ENCODE measurements at regions of chr6 and their contacts with region 1.

Region 1: GRCh38 chr6:66186756-66187155 is 479.7 kb upstream of the EYS start:
- DNase-seq: no peak
- ATAC-seq: no peak

Region 2: GRCh38 chr6:66264376-66264775 is 77.6 kb after region 1 on chr6:
- intact Hi-C with region 1: loop called (anchors 2 kb)
- DNase-seq: no peak
- ATAC-seq: no peak

Measured in sciatic nerve (tissue), 2 donors.